ENCODE measurements at regions of chr2 and their contacts with region 1.

Region 1: GRCh38 chr2:81148323-81148722 is 843.8 kb upstream of the LRRTM1 start:
- DNase-seq: no peak
- H3K4me3 ChIP-seq: no peak overlapping the region
- H3K27ac ChIP-seq: no peak overlapping the region
- H3K4me1 ChIP-seq: no peaks in the 10 kb centered on the region
- H3K27me3 ChIP-seq: no peaks in the 10 kb centered on the region
- CTCF ChIP-seq: no peak
- POLR2A ChIP-seq: no peak

Region 2: GRCh38 chr2:81324046-81324445 is 175.7 kb after region 1 on chr2:
- intact Hi-C with region 1: loop called (anchors 10 kb)
- DNase-seq: no peak
- H3K4me3 ChIP-seq: no peak overlapping the region
- H3K27ac ChIP-seq: no peak overlapping the region
- H3K4me1 ChIP-seq: no peaks in the 10 kb centered on the region
- H3K27me3 ChIP-seq: no peaks in the 10 kb centered on the region
- CTCF ChIP-seq: no peak
- POLR2A ChIP-seq: no peak

Measured in breast epithelium (tissue), 4 donors.